ENCODE measurements at regions of chr21 and their contacts with region 1.

Region 1: DNA sequence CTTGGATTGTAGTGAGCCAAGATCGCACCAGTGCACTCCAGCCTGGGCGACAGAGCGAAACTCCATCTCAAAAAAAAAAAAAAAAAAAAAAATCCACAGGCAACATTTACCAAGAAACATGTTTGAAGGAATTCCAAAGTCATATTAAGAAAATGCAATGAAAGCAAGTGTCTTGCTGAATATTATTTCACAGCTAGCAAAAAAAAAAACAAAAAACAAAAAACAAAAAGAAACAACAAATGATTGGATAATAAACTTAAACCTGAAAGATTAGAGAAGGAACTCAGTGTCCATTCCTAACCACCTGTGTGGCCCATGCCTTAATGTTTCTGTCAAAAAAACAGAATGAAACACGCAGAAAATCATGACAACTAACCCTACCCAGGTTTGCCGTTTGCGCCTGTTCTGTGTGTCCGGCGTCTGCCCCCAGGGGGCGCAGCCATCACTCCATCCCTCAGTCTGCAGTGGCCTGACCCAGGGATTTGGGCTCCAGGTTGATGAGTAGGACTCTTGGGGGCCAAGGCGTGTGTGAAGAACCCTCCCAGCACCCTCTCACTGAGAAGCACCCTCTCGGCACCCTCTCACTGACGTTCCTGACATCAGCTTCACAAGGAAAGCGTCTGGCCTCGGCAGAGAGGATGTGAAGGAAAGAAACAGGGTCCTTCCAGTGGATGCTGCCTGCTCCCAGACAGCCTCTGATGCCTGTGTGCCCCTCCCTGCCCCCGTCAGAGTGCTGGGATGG is 19.2 kb upstream of the PTTG1IP start:
- DNase-seq: peak; percentile 48
- H3K4me3 ChIP-seq: no peak overlapping the region
- H3K27ac ChIP-seq: no peak overlapping the region
- H3K4me1 ChIP-seq: no peaks in the 10 kb centered on the region
- H3K27me3 ChIP-seq: no peaks in the 10 kb centered on the region
- CTCF ChIP-seq: peak; percentile 62 to 87 (median 73)
- POLR2A ChIP-seq: no peak

Region 2: GRCh38 chr21:44285509-44285992 is 607.2 kb before region 1 on chr21 and contains the start of gene AIRE:
- intact Hi-C with region 1: no loop called
- DNase-seq: no peak
- H3K4me3 ChIP-seq: peak within 1 kb of the TSS in 1 of 2 donors; percentile 10
- H3K27ac ChIP-seq: no peak within 1 kb of the TSS
- H3K4me1 ChIP-seq: no peaks in the 10 kb centered on the region
- H3K27me3 ChIP-seq: peaks cover 3% of the 10 kb centered on the region
- CTCF ChIP-seq: no peak
- POLR2A ChIP-seq: no peak
- total RNA-seq, gene AIRE: not detected

Region 3: GRCh38 chr21:44932408-44933181 is 39.9 kb after region 1 on chr21:
- intact Hi-C with region 1: loop called (anchors 1 kb)
- DNase-seq: no peak
- H3K4me3 ChIP-seq: peak overlapping the region; percentile 26 to 37
- H3K27ac ChIP-seq: no peak overlapping the region
- H3K4me1 ChIP-seq: peaks cover 12% of the 10 kb centered on the region
- H3K27me3 ChIP-seq: peaks cover 10% of the 10 kb centered on the region
- CTCF ChIP-seq: peak; percentile 35 to 76 (median 54)
- POLR2A ChIP-seq: no peak